Naive thymus-derived CD4-positive, alpha-beta T cell (primary cell): ENCODE measurements at regions of chr22 and their contacts with region 1.

Region 1: DNA sequence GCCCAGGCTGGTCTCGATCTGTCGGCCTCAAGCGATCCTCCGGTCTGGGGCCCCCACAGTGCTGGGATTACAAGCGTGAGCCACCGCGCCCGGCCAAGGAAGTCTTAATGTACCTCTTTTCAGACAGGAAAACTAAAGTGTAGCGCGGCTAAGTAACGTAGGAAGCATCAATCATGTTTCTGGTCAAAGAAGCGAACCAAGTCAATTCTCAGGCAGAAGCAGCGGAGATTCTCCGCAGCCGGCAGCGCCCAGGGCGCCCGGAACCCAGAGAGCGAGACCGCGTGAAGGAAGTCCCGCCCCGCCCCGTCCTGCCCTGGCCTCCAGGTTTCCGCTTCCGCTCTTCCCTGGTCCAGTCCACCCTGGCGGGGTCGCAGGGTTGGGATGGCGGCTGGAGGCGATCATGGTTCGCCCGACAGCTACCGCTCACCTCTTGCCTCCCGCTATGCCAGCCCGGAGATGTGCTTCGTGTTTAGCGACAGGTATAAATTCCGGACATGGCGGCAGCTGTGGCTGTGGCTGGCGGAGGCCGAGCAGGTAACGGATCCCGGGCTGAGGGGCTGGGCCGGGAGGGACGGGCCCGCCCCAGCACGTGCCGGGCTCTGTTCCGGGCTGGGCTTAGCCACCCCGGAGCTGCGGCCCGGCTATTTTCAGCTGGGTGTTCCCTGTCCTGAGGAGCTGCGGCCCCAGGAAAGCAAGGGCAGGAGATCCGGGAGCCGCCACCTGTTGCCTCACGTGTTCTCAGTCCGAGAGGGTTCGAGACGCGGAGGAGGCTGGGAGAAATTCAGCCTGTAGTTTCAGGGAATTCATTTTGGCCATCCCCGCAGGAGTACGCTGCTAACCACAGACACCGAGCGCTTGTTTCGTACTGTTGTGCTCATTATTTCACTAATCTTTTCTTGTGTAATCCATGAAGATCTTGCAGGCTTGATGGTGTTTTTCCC is at the start of gene ADSL:
- DNase-seq: peak; percentile 70 to 88 (median 81)
- ATAC-seq: peak; percentile 92
- H3K4me3 ChIP-seq: peak within 1 kb of the TSS; percentile 98
- H3K4me3 Mint-ChIP-seq: peak within 1 kb of the TSS; percentile 93 to 99 (median 98)
- H3K27ac ChIP-seq: peak within 1 kb of the TSS; percentile 83
- H3K27ac Mint-ChIP-seq: peak within 1 kb of the TSS; percentile 92 to 99 (median 98)
- H3K4me1 ChIP-seq: peaks cover 37 to 53% of the 10 kb centered on the region in 2 donors
- H3K4me1 Mint-ChIP-seq: peaks cover 36 to 69% (median 49%) of the 10 kb centered on the region in 7 donors
- H3K27me3 ChIP-seq: no peaks in the 10 kb centered on the region
- H3K27me3 Mint-ChIP-seq: no peaks in the 10 kb centered on the region
- total RNA-seq, gene ADSL: 54.4 to 127 (median 61.9) TPM

Region 2: DNA sequence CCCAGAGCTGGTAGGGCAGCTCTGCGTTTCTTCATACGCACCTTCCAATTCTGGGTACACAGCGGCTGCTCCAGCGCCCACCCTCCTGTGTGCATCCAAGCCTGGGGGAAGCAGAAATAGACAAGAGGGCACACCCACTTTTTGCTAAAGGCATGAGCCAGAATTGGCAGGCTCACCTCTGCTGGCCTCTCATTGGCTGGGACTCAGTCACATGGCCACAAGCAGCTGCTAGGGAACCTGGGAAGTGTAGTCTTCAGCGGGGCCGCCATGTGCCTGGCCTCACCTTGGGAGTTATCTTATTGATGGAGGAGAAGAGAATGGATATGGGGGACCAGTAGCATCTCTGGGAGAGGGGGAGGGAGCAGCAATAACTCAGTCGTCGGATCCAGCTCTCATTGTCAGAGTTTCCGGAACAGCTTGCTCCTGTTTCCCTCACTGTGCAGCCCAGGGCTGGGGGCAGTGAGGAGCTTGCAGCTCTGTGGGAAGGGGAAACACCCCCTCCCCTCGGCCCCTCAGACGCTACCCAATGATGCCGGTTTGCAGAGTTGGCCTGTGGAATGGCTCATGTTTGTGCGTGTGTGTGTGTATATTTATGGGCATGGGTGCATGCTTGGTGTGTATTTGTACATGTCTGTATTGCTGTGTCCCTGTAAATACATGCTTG is 856.2 kb before region 1 on chr22:
- CTCF ChIA-PET with region 1: no interaction called
- POLR2A ChIA-PET with region 1: no interaction called
- intact Hi-C with region 1: no loop called
- DNase-seq: peak; percentile 43 to 83 (median 69)
- ATAC-seq: peak; percentile 97
- H3K4me3 ChIP-seq: no peak overlapping the region
- H3K4me3 Mint-ChIP-seq: peak overlapping the region in 1 of 10 donors; percentile 59
- H3K27ac ChIP-seq: no peak overlapping the region
- H3K27ac Mint-ChIP-seq: peak overlapping the region in 2 of 9 donors; percentile 82 to 88
- H3K4me1 ChIP-seq: no peaks in the 10 kb centered on the region
- H3K4me1 Mint-ChIP-seq: peaks cover 6 to 17% (median 14%) of the 10 kb centered on the region in 7 donors
- H3K27me3 ChIP-seq: no peaks in the 10 kb centered on the region
- H3K27me3 Mint-ChIP-seq: no peaks in the 10 kb centered on the region

Region 3: GRCh38 chr22:39946503-39947219 is 399.8 kb before region 1 on chr22:
- CTCF ChIA-PET with region 1: interaction called, 3 read pairs
- POLR2A ChIA-PET with region 1: interaction called, 5 read pairs
- intact Hi-C with region 1: loop called (anchors 5 kb)
- DNase-seq: no peak
- ATAC-seq: peak; percentile 49
- H3K4me3 ChIP-seq: peak overlapping the region; percentile 26
- H3K4me3 Mint-ChIP-seq: peak overlapping the region in 9 of 10 donors; percentile 65 to 82 (median 78)
- H3K27ac ChIP-seq: peak overlapping the region; percentile 79
- H3K27ac Mint-ChIP-seq: peak overlapping the region in 5 of 9 donors; percentile 77 to 98 (median 98)
- H3K4me1 ChIP-seq: peaks cover 81 to 99% of the 10 kb centered on the region in 2 donors
- H3K4me1 Mint-ChIP-seq: peaks cover 78 to 100% (median 96%) of the 10 kb centered on the region in 7 donors
- H3K27me3 ChIP-seq: no peaks in the 10 kb centered on the region
- H3K27me3 Mint-ChIP-seq: no peaks in the 10 kb centered on the region

Region 4: DNA sequence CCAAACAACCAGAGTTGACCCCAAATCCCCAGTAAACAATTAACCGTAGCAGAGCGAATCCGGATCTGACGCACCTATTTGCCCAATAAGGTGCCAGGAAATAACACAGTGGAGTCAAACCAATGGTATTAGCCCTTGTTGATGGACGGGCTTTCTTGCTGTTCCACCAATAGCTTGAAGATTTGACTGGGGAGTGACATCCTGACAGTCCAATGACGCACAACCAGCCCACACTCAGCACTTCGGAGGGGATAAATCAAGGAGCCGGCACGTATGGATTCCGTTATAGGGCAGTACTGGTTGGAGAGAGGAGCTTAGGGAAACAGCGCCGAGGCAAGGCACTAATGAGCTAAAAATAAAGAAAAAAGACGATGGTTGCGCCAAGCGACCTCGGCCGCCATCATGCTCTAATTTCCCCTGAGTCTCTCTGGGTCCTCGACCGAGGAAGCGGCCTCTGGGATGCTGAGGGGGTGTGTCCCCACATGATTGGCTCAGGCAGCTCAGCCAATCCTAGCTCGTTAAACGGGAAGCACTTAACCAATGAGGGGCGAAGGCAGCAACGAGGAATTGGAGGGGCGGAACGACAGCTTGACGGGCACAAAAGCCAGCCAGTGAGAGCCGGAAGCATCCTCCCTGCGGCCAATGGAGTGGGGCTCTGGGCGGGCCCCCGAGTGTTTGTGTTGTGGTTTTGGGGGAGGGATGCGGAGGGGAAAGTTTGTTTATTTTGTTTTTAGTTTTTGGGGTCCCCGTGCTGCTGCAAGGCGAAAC is 302.2 kb before region 1 on chr22:
- CTCF ChIA-PET with region 1: interaction called, 23 read pairs
- POLR2A ChIA-PET with region 1: interaction called, 66 read pairs
- intact Hi-C with region 1: loop called (anchors 1 kb)
- DNase-seq: peak; percentile 87 to 100 (median 99)
- ATAC-seq: peak; percentile 92
- H3K4me3 ChIP-seq: peak overlapping the region; percentile 81
- H3K4me3 Mint-ChIP-seq: peak overlapping the region; percentile 94 to 99 (median 98)
- H3K27ac ChIP-seq: peak overlapping the region; percentile 88
- H3K27ac Mint-ChIP-seq: peak overlapping the region; percentile 98 to 100 (median 99)
- H3K4me1 ChIP-seq: peaks cover 15 to 29% of the 10 kb centered on the region in 2 donors
- H3K4me1 Mint-ChIP-seq: peaks cover 23 to 53% (median 40%) of the 10 kb centered on the region in 7 donors
- H3K27me3 ChIP-seq: no peaks in the 10 kb centered on the region
- H3K27me3 Mint-ChIP-seq: peaks cover 3 to 17% (median 7%) of the 10 kb centered on the region in 5 donors

Region 5: DNA sequence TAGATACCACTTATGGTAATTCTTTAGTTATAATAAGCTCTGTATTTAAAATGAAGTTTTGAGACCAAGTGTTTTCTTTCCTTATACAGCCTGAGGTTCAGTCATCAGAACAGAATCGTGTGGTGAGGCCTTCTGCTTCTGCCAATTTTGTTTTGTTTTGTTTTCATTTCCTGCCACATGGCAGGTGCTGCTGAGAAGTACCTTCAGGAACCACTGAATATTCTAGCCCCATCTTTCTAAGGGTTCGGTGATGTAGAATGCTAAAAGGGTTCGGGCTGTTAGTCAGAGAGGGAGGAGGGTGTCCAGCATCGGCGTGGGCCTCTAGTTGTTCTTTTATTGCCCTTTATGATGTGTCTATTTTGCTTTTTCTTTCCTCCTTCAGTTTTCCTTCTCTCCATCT is 142.9 kb before region 1 on chr22:
- CTCF ChIA-PET with region 1: interaction called, 3 read pairs
- POLR2A ChIA-PET with region 1: interaction called, 3 read pairs
- intact Hi-C with region 1: loop called in 1 of 2 experiments (anchors 5 kb)
- DNase-seq: peak in 7 of 9 donors; percentile 46 to 72 (median 60)
- ATAC-seq: peak; percentile 93
- H3K4me3 ChIP-seq: peak overlapping the region; percentile 5
- H3K4me3 Mint-ChIP-seq: peak overlapping the region; percentile 60 to 73 (median 66)
- H3K27ac ChIP-seq: peak overlapping the region; percentile 54
- H3K27ac Mint-ChIP-seq: peak overlapping the region; percentile 74 to 95 (median 85)
- H3K4me1 ChIP-seq: peaks cover 24 to 49% of the 10 kb centered on the region in 2 donors
- H3K4me1 Mint-ChIP-seq: peaks cover 50 to 88% (median 79%) of the 10 kb centered on the region in 7 donors
- H3K27me3 ChIP-seq: no peaks in the 10 kb centered on the region
- H3K27me3 Mint-ChIP-seq: no peaks in the 10 kb centered on the region

Region 6: GRCh38 chr22:40276996-40277823 is 69.2 kb before region 1 on chr22:
- CTCF ChIA-PET with region 1: interaction called, 3 read pairs
- POLR2A ChIA-PET with region 1: interaction called, 3 read pairs
- intact Hi-C with region 1: loop called (anchors 2 kb)
- DNase-seq: no peak
- ATAC-seq: no peak
- H3K4me3 ChIP-seq: peak overlapping the region; percentile 40
- H3K4me3 Mint-ChIP-seq: peak overlapping the region in 6 of 10 donors; percentile 1 to 88 (median 64)
- H3K27ac ChIP-seq: peak overlapping the region; percentile 82
- H3K27ac Mint-ChIP-seq: peak overlapping the region; percentile 57 to 97 (median 89)
- H3K4me1 ChIP-seq: peaks cover 0 to 35% of the 10 kb centered on the region in 2 donors
- H3K4me1 Mint-ChIP-seq: peaks cover 23 to 89% (median 69%) of the 10 kb centered on the region in 7 donors
- H3K27me3 ChIP-seq: no peaks in the 10 kb centered on the region
- H3K27me3 Mint-ChIP-seq: no peaks in the 10 kb centered on the region

Region 7: DNA sequence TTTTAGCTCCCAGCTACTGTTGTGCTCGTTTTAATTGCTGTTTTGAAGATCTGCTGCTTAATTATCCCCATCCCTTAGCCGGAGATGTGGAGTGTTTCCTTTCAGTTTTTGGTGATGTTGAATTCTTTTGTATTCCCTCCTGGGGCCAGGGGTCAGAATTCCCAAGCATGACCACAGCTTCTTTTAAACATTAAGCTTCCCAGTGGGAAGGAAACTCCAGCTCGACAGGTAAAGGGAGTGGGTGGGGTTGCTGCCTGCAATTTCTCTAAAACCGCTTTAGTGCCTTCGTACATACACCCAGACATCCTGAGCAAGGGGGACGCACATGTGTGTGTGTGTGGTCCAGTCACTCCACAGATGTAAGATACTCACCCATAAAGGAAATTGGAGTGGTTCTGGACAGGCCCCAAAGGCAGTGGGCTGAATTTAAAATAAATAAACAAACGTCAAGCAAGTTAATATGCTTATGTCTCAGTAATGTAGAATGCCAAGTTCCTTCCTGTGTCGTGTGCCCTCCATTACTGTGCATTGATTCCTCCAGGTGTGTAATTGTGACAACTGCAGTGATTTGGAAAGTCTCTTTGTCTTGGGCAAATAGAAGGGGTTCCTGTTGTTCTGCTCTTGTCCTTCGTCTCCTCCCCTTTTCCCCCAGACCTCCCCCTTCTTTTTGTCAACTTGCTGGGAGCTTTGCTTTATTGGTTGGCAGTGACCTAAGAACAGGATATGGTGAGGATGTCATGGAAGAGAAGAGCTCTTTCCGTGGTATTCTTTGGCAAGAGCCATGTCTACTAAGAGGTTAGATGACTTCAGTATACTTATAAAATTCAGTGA is 19.3 kb before region 1 on chr22:
- CTCF ChIA-PET with region 1: interaction called, 8 read pairs
- POLR2A ChIA-PET with region 1: interaction called, 77 read pairs
- intact Hi-C with region 1: loop called (anchors 1 kb)
- DNase-seq: peak in 6 of 9 donors; percentile 37 to 79 (median 53)
- ATAC-seq: no peak
- H3K4me3 ChIP-seq: no peak overlapping the region
- H3K4me3 Mint-ChIP-seq: peak overlapping the region; percentile 31 to 78 (median 58)
- H3K27ac ChIP-seq: peak overlapping the region; percentile 59
- H3K27ac Mint-ChIP-seq: peak overlapping the region; percentile 53 to 99 (median 95)
- H3K4me1 ChIP-seq: peaks cover 62 to 96% of the 10 kb centered on the region in 2 donors
- H3K4me1 Mint-ChIP-seq: peaks cover 51 to 100% (median 97%) of the 10 kb centered on the region in 7 donors
- H3K27me3 ChIP-seq: no peaks in the 10 kb centered on the region
- H3K27me3 Mint-ChIP-seq: no peaks in the 10 kb centered on the region

Region 8: GRCh38 chr22:40418366-40419201 is 72.1 kb after region 1 on chr22:
- CTCF ChIA-PET with region 1: no interaction called
- POLR2A ChIA-PET with region 1: no interaction called
- intact Hi-C with region 1: no loop called
- DNase-seq: no peak
- ATAC-seq: no peak
- H3K4me3 ChIP-seq: no peak overlapping the region
- H3K4me3 Mint-ChIP-seq: no peak overlapping the region
- H3K27ac ChIP-seq: peak overlapping the region; percentile 49
- H3K27ac Mint-ChIP-seq: peak overlapping the region in 3 of 9 donors; percentile 12 to 62 (median 14)
- H3K4me1 ChIP-seq: peaks cover 0 to 16% of the 10 kb centered on the region in 2 donors
- H3K4me1 Mint-ChIP-seq: peaks cover 25 to 56% (median 45%) of the 10 kb centered on the region in 7 donors
- H3K27me3 ChIP-seq: no peaks in the 10 kb centered on the region
- H3K27me3 Mint-ChIP-seq: no peaks in the 10 kb centered on the region